Activated B cell treated with CpG ODN at 0.5 μM for 24 hours (primary cell): ENCODE measurements at regions of chr12 and their contacts with region 1.

Region 1: GRCh38 chr12:42482445-42483237 is 106.9 kb downstream of the PRICKLE1 start:
- DNase-seq: peak; percentile 89
- ATAC-seq: peak; percentile 76
- H3K4me3 Mint-ChIP-seq: peak overlapping the region; percentile 94
- H3K27ac Mint-ChIP-seq: peak overlapping the region; percentile 86
- H3K4me1 Mint-ChIP-seq: peaks cover 58% of the 10 kb centered on the region
- H3K27me3 Mint-ChIP-seq: no peaks in the 10 kb centered on the region
- CTCF ChIP-seq: no peak

Region 2: DNA sequence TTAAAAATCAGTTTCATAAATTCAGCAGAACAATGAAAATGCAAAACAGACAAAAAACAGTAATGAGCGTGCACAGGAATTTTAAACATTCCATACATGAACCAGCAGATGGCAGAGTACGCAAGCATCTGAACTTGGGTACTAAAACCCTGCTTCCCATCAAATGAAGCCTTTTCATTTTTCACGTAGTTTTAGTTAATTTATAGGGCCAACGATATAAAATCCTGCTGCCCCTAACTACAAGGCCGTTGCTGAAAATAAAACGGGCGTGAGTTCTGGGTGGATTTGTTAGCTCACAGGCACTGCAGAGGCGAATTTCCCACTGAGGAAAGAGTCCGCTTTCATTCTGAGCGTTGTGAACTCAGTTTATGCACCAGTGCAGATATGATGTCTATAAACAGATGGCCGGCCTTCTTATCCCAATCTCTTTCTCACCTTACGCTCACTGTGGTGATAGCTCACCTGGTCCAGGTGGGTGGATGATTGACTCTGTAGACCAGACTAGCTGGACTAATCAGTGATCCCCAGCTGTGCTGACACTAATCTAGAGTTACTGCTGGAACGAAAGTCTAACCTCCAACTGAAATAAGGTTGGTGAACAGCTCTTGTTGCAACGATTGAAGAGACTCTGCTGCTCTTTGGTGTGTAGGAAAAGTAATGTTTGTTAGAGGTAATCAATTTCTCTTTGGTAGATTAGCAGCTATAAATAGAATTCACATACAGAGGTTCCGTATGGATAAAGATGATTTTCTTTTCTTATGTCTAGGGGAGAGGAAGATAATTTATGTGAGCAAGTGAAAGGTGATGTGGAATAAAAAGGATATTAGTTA is 1205.3 kb before region 1 on chr12:
- CTCF ChIA-PET with region 1: no interaction called
- POLR2A ChIA-PET with region 1: no interaction called
- intact Hi-C with region 1: loop called (anchors 2 kb)
- DNase-seq: no peak
- ATAC-seq: peak; percentile 37
- H3K4me3 Mint-ChIP-seq: no peak overlapping the region
- H3K27ac Mint-ChIP-seq: no peak overlapping the region
- H3K4me1 Mint-ChIP-seq: peaks cover 3% of the 10 kb centered on the region
- H3K27me3 Mint-ChIP-seq: peaks cover 5% of the 10 kb centered on the region
- CTCF ChIP-seq: no peak

Region 3: DNA sequence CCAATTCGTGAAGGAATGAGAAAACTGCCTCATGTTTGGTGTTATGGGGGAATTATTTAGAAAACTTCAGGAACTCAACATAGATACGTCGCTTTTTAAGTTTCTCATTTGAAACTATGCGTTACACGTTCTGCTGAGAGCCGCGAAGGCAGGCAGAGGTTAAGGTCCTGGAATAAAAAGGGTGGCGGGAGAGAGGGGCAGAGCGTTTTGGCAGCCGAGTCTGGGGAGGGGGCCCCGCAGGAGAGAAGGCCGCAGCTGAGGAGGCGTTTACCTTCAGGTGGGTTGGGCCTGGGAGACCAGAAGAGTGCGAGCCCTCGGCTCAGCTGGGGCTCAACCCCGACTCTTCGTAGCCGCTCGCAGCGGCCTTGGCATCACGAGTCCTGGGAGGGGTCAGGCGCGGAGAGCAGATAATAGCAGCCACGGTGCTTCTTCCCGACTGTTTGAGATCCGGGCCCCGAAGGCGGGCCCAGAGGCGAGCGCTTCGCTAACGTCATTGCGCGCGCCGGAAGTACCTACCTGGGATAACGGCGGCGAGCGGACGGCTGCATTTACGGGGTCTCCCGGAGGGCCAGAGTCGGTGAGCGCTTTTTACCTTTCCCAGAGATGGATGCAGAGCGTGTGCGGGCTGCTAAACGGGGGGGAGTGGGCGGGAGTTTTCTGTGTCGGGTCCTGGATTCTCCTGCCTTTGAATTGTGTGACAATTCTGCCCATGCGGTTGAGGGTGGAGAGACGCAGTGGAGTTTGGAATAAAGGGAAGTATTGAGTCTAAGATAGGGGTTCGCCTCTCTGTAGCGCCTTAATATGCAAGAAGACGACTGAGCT is 156.8 kb before region 1 on chr12 and contains the starts of genes PPHLN1 and ZCRB1:
- CTCF ChIA-PET with region 1: no interaction called
- POLR2A ChIA-PET with region 1: interaction called, 3 read pairs
- intact Hi-C with region 1: loop called (anchors 5 kb)
- DNase-seq: peak; percentile 73
- ATAC-seq: peak; percentile 89
- H3K4me3 Mint-ChIP-seq: peak within 1 kb of the TSS; percentile 94
- H3K27ac Mint-ChIP-seq: peak within 1 kb of the TSS; percentile 90
- H3K4me1 Mint-ChIP-seq: peaks cover 51% of the 10 kb centered on the region
- H3K27me3 Mint-ChIP-seq: no peaks in the 10 kb centered on the region
- CTCF ChIP-seq: no peak
- total RNA-seq, gene PPHLN1: 94.0 and 95.9 TPM in 2 replicates
- total RNA-seq, gene ZCRB1: 37.4 and 37.6 TPM in 2 replicates

Region 4: DNA sequence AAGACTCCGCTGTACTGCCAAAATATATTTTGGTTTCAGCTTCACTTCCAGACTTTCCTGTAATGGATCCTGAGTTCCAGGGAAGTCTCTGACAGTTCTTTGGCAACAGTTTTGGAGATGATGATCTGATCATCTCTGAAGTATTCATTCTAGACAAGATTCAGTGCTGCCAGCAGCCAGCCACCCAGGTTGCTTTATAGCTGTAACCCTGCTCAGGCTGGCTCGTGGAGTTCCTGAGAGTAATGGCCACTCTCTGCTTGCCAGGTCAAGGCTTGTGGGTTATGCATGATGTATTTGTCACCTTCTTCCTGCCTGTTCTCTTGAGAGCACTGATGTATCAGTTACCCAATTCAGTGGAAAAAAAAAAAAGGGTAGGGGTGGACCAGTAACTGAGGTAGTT is 32.4 kb before region 1 on chr12:
- CTCF ChIA-PET with region 1: interaction called, 3 read pairs
- POLR2A ChIA-PET with region 1: interaction called, 3 read pairs
- intact Hi-C with region 1: loop called (anchors 2 kb)
- DNase-seq: no peak
- ATAC-seq: no peak
- H3K4me3 Mint-ChIP-seq: peak overlapping the region; percentile 15
- H3K27ac Mint-ChIP-seq: no peak overlapping the region
- H3K4me1 Mint-ChIP-seq: peaks cover 82% of the 10 kb centered on the region
- H3K27me3 Mint-ChIP-seq: no peaks in the 10 kb centered on the region
- CTCF ChIP-seq: no peak

Region 5: GRCh38 chr12:42589465-42590329 is 107.1 kb after region 1 on chr12 and contains the start of gene PRICKLE1:
- CTCF ChIA-PET with region 1: no interaction called
- POLR2A ChIA-PET with region 1: no interaction called
- intact Hi-C with region 1: loop called (anchors 2 kb)
- DNase-seq: peak; percentile 67
- ATAC-seq: peak; percentile 81
- H3K4me3 Mint-ChIP-seq: peak within 1 kb of the TSS; percentile 87
- H3K27ac Mint-ChIP-seq: peak within 1 kb of the TSS; percentile 24
- H3K4me1 Mint-ChIP-seq: peaks cover 18% of the 10 kb centered on the region
- H3K27me3 Mint-ChIP-seq: peaks cover 55% of the 10 kb centered on the region
- CTCF ChIP-seq: no peak
- total RNA-seq, gene PRICKLE1: 4.5 and 5.4 TPM in 2 replicates

Region 6: GRCh38 chr12:43676183-43676813 is 1193.7 kb after region 1 on chr12:
- CTCF ChIA-PET with region 1: no interaction called
- POLR2A ChIA-PET with region 1: no interaction called
- intact Hi-C with region 1: loop called (anchors 10 kb)
- DNase-seq: no peak
- ATAC-seq: peak; percentile 28
- H3K4me3 Mint-ChIP-seq: no peak overlapping the region
- H3K27ac Mint-ChIP-seq: no peak overlapping the region
- H3K4me1 Mint-ChIP-seq: no peaks in the 10 kb centered on the region
- H3K27me3 Mint-ChIP-seq: peaks cover 20% of the 10 kb centered on the region
- CTCF ChIP-seq: no peak